ENCODE measurements at regions of chr18 and their contacts with region 1.

Region 1: DNA sequence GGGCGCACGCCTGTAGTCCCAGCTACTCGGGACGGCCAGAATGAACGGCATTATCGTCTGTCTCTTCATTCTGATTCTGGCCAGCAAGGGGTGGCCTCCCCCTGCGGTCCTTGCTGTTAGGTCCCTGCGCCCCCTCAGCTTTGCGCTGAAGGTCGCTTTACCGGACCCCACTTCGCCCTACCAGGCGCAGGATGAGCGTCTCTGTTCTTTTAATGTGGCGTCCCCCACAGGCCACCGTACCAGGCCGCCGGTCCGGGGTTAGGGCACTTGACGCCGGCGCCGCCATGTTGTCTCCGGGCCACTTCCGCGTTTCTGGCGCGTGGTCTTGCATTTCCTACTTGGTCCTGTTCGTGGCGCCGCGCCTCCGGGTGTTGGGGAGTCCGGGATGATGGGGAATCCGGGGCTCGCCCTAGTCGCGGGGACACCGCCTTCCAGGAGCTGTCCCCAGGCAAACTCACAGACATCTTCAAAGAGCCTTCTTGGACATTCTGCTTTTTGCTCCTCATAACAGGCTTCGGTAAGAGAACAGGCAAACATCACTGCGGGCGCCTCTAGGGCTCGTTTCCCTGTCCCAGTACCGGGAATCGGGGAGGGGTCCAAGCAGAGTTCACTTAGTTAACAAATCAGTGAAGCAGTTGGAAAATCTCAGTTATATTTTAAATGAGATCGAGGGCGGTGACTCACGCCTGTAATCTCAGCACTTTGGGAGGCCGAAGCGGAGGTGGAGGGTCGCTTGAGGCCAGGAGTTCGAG is 8.5 kb upstream of the NARS1 start:
- DNase-seq: peak; percentile 95
- ATAC-seq: peak; percentile 93
- H3K4me3 ChIP-seq: peak overlapping the region; percentile 89 to 99 (median 98)
- H3K4me3 Mint-ChIP-seq: peak overlapping the region; percentile 97
- H3K27ac ChIP-seq: peak overlapping the region; percentile 82 to 85
- H3K27ac Mint-ChIP-seq: peak overlapping the region; percentile 98
- H3K4me1 ChIP-seq: peaks cover 12 to 13% of the 10 kb centered on the region in 2 donors
- H3K4me1 Mint-ChIP-seq: peaks cover 23% of the 10 kb centered on the region
- H3K27me3 ChIP-seq: no peaks in the 10 kb centered on the region
- H3K27me3 Mint-ChIP-seq: no peaks in the 10 kb centered on the region
- CTCF ChIP-seq: peak; percentile 77

Region 2: DNA sequence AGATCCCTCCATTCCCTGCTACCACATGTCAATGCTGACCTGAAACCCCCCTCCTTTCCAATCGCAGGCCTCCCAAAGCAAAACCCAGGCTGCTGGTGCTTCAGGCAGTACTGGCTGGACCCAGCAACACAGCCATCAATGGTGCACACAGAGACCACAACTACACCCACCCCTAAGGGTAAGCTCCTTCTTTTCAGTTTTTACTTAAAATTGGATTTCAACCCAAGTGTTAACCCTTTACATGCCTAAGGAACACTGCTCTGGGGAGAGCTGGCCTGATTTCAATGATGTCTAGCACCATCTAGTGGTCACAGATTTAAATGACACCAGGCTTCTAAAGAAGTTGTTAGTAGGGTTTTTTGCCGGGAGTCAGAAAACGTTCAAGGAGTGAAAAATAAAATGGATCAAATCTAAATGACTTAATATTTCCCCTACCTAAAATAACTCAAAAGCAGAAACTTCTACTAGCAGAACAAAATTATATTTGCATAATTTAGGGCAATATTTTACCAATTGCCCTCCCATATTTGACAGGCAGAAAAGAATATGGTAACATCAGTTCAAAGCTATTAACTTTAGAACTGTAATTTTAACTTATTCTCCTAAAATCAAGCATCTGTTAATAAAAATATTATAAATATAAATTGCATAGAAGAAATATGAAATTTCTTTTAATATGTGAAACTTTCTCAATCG is 68.3 kb before region 1 on chr18:
- CTCF ChIA-PET with region 1: no interaction called
- POLR2A ChIA-PET with region 1: no interaction called
- intact Hi-C with region 1: no loop called
- DNase-seq: peak; percentile 68
- ATAC-seq: peak; percentile 53
- H3K4me3 ChIP-seq: no peak overlapping the region
- H3K4me3 Mint-ChIP-seq: no peak overlapping the region
- H3K27ac ChIP-seq: no peak overlapping the region
- H3K27ac Mint-ChIP-seq: no peak overlapping the region
- H3K4me1 ChIP-seq: no peaks in the 10 kb centered on the region
- H3K4me1 Mint-ChIP-seq: peaks cover 1% of the 10 kb centered on the region
- H3K27me3 ChIP-seq: no peaks in the 10 kb centered on the region
- H3K27me3 Mint-ChIP-seq: no peaks in the 10 kb centered on the region
- CTCF ChIP-seq: peak; percentile 98

Region 3: DNA sequence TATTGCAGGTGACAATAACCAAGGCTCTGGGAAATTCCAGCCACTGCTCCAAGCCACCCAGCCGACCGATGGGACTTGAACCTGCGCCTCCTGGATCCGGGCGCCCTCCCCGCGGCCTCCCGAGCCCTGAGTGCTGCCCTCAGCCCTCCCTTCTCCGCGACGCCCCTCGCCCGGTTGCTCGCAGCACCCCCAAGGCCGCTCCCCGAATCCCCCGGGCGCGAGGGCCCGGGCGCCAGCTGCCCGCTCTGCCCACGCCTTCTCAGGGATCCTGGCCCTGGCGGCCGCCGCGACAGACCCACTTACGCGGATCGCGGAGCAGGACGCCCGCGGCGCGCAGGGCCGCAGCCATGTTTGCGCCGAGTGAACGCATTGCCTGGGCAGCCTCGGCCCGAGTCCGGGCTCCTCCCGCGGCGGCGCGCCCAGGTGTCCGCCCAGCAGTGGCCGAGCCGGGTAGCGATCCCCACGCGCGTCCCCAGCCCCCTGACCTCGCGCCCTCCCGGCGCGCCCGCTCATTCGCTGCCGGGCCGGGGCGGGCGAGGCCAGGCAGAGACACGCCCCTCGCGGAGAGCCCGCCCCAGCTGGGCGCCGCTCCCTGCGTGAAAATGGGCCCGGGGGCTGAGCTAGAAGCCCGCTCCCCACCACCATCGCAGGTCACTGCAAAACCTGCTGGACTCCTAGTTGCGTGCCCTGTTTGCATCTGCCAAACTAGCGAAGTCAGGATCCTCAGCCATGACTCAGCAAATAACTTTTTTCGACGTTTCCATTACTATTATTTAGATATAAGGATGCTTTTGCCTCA is 43.7 kb before region 1 on chr18 and contains the start of gene FECH:
- CTCF ChIA-PET with region 1: no interaction called
- POLR2A ChIA-PET with region 1: no interaction called
- intact Hi-C with region 1: loop called (anchors 2 kb)
- DNase-seq: peak; percentile 78
- ATAC-seq: peak; percentile 97
- H3K4me3 ChIP-seq: peak within 1 kb of the TSS; percentile 53 to 67 (median 63)
- H3K4me3 Mint-ChIP-seq: peak within 1 kb of the TSS; percentile 89
- H3K27ac ChIP-seq: peak within 1 kb of the TSS in 1 of 2 donors; percentile 70
- H3K27ac Mint-ChIP-seq: peak within 1 kb of the TSS; percentile 79
- H3K4me1 ChIP-seq: peaks cover 17 to 21% of the 10 kb centered on the region in 2 donors
- H3K4me1 Mint-ChIP-seq: peaks cover 18% of the 10 kb centered on the region
- H3K27me3 ChIP-seq: no peaks in the 10 kb centered on the region
- H3K27me3 Mint-ChIP-seq: no peaks in the 10 kb centered on the region
- CTCF ChIP-seq: no peak
- total RNA-seq, gene FECH: 10.4 and 12.6 TPM in 2 replicates

Region 4: DNA sequence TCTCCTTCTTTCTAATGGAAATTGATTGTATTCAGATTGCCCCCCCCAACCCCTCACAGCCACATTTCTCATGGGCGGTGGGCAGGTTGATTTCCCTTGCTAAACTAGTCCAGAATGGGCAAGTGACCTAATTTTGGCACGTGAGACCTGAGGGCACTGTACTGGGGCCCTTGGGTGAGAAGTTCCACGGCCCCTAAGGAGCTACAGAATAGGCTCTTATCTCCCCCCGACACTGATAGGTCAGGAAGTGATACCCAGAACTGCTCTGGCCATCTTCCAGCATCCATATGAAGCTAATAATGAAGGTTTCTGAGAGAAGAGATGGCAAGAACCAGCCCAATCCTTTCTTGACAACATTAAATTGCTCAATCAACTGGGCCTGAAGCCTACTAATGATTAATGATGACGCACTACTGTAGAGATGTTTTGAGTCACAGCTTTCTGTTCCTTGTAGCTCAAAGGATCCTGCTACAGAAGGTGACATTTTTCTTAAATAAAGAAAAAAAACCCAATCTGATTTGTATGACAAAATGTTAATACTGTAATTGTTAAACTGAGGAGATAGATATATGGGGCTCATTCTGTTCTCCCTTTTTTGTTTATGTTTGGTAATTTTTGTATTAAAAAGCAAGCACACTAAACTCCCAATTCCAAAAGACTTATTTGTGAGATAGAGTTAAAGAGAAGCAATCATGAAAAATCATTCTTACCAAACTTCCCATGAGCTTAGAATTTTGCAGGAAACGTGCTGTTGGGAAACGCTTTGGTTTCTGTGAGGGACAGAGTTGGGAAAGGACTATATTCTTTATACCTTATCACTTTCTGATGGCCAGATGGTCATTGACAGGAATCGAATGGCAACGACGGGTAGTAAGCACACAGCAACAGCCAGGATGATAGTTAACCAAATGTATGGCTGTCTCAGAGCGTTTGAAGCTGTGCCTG is 19.6 kb after region 1 on chr18:
- CTCF ChIA-PET with region 1: interaction called, 8 read pairs
- POLR2A ChIA-PET with region 1: no interaction called
- intact Hi-C with region 1: loop called (anchors 2 kb)
- DNase-seq: peak; percentile 19
- ATAC-seq: peak; percentile 69
- H3K4me3 ChIP-seq: no peak overlapping the region
- H3K4me3 Mint-ChIP-seq: no peak overlapping the region
- H3K27ac ChIP-seq: no peak overlapping the region
- H3K27ac Mint-ChIP-seq: peak overlapping the region; percentile 80
- H3K4me1 ChIP-seq: peaks cover 11 to 13% of the 10 kb centered on the region in 2 donors
- H3K4me1 Mint-ChIP-seq: peaks cover 44% of the 10 kb centered on the region
- H3K27me3 ChIP-seq: no peaks in the 10 kb centered on the region
- H3K27me3 Mint-ChIP-seq: no peaks in the 10 kb centered on the region
- CTCF ChIP-seq: no peak

Region 5: GRCh38 chr18:57748770-57749603 is 118.8 kb after region 1 on chr18:
- CTCF ChIA-PET with region 1: interaction called, 3 read pairs
- POLR2A ChIA-PET with region 1: interaction called, 4 read pairs
- intact Hi-C with region 1: loop called (anchors 10 kb)
- DNase-seq: peak; percentile 35
- ATAC-seq: peak; percentile 92
- H3K4me3 ChIP-seq: no peak overlapping the region
- H3K4me3 Mint-ChIP-seq: peak overlapping the region; percentile 21
- H3K27ac ChIP-seq: peak overlapping the region; percentile 40 to 55
- H3K27ac Mint-ChIP-seq: peak overlapping the region; percentile 13
- H3K4me1 ChIP-seq: peaks cover 19 to 20% of the 10 kb centered on the region in 2 donors
- H3K4me1 Mint-ChIP-seq: peaks cover 41% of the 10 kb centered on the region
- H3K27me3 ChIP-seq: no peaks in the 10 kb centered on the region
- H3K27me3 Mint-ChIP-seq: no peaks in the 10 kb centered on the region
- CTCF ChIP-seq: no peak

Region 6: DNA sequence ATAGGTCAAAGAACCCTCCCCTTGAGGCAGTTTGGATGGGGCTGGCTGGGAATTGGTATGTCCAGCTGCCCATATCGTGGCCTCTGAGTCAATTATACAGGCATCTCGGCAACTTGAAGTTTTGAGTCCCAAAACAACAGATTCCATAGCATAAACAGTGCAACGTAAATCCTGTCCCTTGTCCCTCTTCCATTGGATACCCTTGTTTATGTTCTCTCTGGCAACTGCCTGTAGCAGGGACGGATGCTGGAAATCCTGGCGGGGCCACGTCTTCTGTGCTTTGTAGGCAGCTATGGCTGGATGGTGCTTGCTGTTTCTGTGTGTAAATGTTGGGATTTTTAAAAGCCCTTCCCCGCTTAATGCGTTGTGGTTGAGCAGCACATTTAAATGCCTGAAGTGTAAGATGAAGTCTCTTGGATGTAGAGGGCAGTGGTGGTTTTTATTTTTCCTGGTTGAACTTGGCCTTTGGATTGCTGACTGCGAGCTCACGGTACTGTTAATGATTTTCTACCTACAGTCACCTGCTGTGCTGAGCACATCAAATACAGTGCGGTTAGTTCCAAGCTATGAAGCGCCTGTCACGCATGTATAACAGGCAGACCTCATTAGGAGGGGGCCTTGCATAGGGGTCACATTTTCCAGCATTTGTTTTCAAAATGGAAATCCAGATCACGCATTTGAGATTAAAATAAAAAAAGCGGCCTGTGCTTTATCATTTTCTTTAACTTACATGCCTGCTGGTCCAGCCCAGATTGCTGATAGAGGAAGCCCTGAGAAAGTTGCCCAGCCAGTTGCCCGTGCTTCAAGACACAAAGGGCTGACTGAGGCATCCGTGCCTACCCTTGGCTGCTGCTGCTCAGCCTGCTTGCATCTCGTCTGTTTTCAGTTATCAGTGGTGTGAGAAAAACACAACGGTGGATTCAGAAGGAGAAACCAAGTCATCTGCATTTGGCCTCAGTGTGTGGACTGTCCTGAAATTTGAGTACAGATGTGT is 498.5 kb after region 1 on chr18:
- CTCF ChIA-PET with region 1: no interaction called
- POLR2A ChIA-PET with region 1: no interaction called
- intact Hi-C with region 1: loop called (anchors 10 kb)
- DNase-seq: no peak
- ATAC-seq: no peak
- H3K4me3 ChIP-seq: no peak overlapping the region
- H3K4me3 Mint-ChIP-seq: no peak overlapping the region
- H3K27ac ChIP-seq: no peak overlapping the region
- H3K27ac Mint-ChIP-seq: no peak overlapping the region
- H3K4me1 ChIP-seq: peaks cover 0 to 4% of the 10 kb centered on the region in 2 donors
- H3K4me1 Mint-ChIP-seq: no peaks in the 10 kb centered on the region
- H3K27me3 ChIP-seq: no peaks in the 10 kb centered on the region
- H3K27me3 Mint-ChIP-seq: no peaks in the 10 kb centered on the region
- CTCF ChIP-seq: no peak

Region 7: GRCh38 chr18:58649966-58650816 is 1020.0 kb after region 1 on chr18:
- CTCF ChIA-PET with region 1: no interaction called
- POLR2A ChIA-PET with region 1: interaction called, 10 read pairs
- intact Hi-C with region 1: no loop called
- DNase-seq: peak; percentile 85
- ATAC-seq: peak; percentile 90
- H3K4me3 ChIP-seq: peak overlapping the region in 4 of 5 experiments; percentile 12 to 59 (median 19)
- H3K4me3 Mint-ChIP-seq: peak overlapping the region; percentile 61
- H3K27ac ChIP-seq: peak overlapping the region; percentile 48 to 69
- H3K27ac Mint-ChIP-seq: peak overlapping the region; percentile 90
- H3K4me1 ChIP-seq: peaks cover 49 to 72% of the 10 kb centered on the region in 2 donors
- H3K4me1 Mint-ChIP-seq: peaks cover 66% of the 10 kb centered on the region
- H3K27me3 ChIP-seq: no peaks in the 10 kb centered on the region
- H3K27me3 Mint-ChIP-seq: no peaks in the 10 kb centered on the region
- CTCF ChIP-seq: no peak

Measured in B cell (primary cell).